Endothelial cell of umbilical vein (primary cell): ENCODE measurements at regions of chr6 and their contacts with region 1.

Region 1: GRCh38 chr6:75208298-75209183 is 2.7 kb upstream of the COL12A1 start:
- DNase-seq: peak; percentile 80
- H3K4me3 ChIP-seq: no peak overlapping the region
- H3K27ac ChIP-seq: no peak overlapping the region
- H3K4me1 ChIP-seq: peaks cover 31% of the 10 kb centered on the region
- H3K27me3 ChIP-seq: peaks cover 17% of the 10 kb centered on the region in 2 experiments
- CTCF ChIP-seq: peak; percentile 78 to 92
- POLR2A ChIP-seq: no peak

Region 2: GRCh38 chr6:73739096-73739495 is 1469.4 kb before region 1 on chr6:
- CTCF ChIA-PET with region 1: interaction called, 200 read pairs
- POLR2A ChIA-PET with region 1: no interaction called
- dilution Hi-C with region 1: no loop called
- intact Hi-C with region 1: loop called (anchors 1 kb)
- DNase-seq: peak; percentile 79
- H3K4me3 ChIP-seq: no peak overlapping the region
- H3K27ac ChIP-seq: no peak overlapping the region
- H3K4me1 ChIP-seq: no peaks in the 10 kb centered on the region
- H3K27me3 ChIP-seq: no peaks in the 10 kb centered on the region
- CTCF ChIP-seq: peak; percentile 43 to 56
- POLR2A ChIP-seq: no peak

Region 3: GRCh38 chr6:73985891-73986290 is 1222.7 kb before region 1 on chr6:
- CTCF ChIA-PET with region 1: interaction called, 19 read pairs
- POLR2A ChIA-PET with region 1: no interaction called
- dilution Hi-C with region 1: no loop called
- intact Hi-C with region 1: no loop called
- DNase-seq: peak; percentile 10
- H3K4me3 ChIP-seq: no peak overlapping the region
- H3K27ac ChIP-seq: no peak overlapping the region
- H3K4me1 ChIP-seq: no peaks in the 10 kb centered on the region
- H3K27me3 ChIP-seq: peaks cover 5 to 6% of the 10 kb centered on the region in 2 experiments
- CTCF ChIP-seq: no peak
- POLR2A ChIP-seq: no peak

Region 4: GRCh38 chr6:74409447-74409846 is 799.1 kb before region 1 on chr6:
- CTCF ChIA-PET with region 1: interaction called, 393 read pairs
- POLR2A ChIA-PET with region 1: no interaction called
- dilution Hi-C with region 1: no loop called
- intact Hi-C with region 1: loop called (anchors 1 kb)
- DNase-seq: peak; percentile 77
- H3K4me3 ChIP-seq: no peak overlapping the region
- H3K27ac ChIP-seq: no peak overlapping the region
- H3K4me1 ChIP-seq: no peaks in the 10 kb centered on the region
- H3K27me3 ChIP-seq: no peaks in the 10 kb centered on the region
- CTCF ChIP-seq: peak; percentile 14 to 23
- POLR2A ChIP-seq: no peak

Region 5: DNA sequence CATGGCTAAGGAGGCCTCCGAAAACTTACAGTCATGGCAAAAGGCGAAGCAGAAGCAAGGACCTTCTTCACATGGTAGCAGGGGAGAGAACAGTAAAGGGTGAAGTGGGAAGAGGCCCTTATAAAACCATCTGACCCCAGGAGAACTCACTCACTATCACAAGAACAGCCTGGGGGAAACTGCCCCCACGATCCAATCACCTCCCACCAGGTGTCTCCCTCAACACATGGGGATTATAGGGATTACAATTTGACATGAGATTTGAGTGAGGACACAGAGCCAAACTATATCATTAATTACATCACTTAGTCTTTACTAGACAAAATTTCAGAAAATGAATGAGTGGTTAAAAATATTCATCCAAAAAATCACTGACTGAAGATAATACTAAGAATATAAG is 456.2 kb before region 1 on chr6:
- CTCF ChIA-PET with region 1: interaction called, 6 read pairs
- POLR2A ChIA-PET with region 1: no interaction called
- dilution Hi-C with region 1: no loop called
- intact Hi-C with region 1: loop called (anchors 1 kb)
- DNase-seq: no peak
- H3K4me3 ChIP-seq: no peak overlapping the region
- H3K27ac ChIP-seq: no peak overlapping the region
- H3K4me1 ChIP-seq: peaks cover 8% of the 10 kb centered on the region
- H3K27me3 ChIP-seq: no peaks in the 10 kb centered on the region
- CTCF ChIP-seq: no peak
- POLR2A ChIP-seq: no peak

Region 6: GRCh38 chr6:75024828-75025227 is 183.7 kb before region 1 on chr6:
- CTCF ChIA-PET with region 1: interaction called, 7 read pairs
- POLR2A ChIA-PET with region 1: no interaction called
- dilution Hi-C with region 1: no loop called
- intact Hi-C with region 1: loop called (anchors 5 kb)
- DNase-seq: peak; percentile 81
- H3K4me3 ChIP-seq: no peak overlapping the region
- H3K27ac ChIP-seq: no peak overlapping the region
- H3K4me1 ChIP-seq: peaks cover 22% of the 10 kb centered on the region
- H3K27me3 ChIP-seq: no peaks in the 10 kb centered on the region
- CTCF ChIP-seq: no peak
- POLR2A ChIP-seq: no peak

Region 7: DNA sequence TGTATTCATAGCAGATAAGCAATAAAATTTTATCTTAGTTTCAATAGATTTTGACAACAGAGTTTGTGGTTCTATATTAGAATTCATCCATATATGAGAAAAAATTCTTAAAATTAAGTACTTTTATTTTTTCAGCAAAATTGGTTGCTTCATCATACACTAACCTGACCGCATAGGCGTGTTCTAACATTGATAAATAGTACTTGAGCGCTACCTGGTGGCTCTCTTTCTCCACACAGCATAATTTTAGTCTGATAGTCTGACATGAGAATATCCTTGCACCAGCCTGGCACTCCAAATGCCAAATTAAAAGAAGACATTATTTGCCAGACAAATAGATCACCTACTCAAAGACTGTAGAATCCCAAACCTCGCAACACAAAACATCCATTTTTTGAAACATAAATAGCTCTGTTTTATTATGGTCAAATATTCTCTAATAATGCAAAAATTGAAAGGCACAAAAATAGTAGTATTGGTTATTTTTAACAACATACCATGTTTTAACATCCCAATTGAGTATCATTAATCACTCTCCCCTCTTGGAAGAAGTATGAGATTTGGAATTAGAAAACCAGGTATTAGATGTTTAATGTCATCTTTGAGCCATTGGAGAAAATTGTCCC is 318.1 kb after region 1 on chr6:
- CTCF ChIA-PET with region 1: interaction called, 8 read pairs
- POLR2A ChIA-PET with region 1: no interaction called
- dilution Hi-C with region 1: no loop called
- intact Hi-C with region 1: loop called (anchors 1 kb)
- DNase-seq: peak; percentile 87
- H3K4me3 ChIP-seq: no peak overlapping the region
- H3K27ac ChIP-seq: no peak overlapping the region
- H3K4me1 ChIP-seq: peaks cover 14% of the 10 kb centered on the region
- H3K27me3 ChIP-seq: peaks cover 2 to 3% of the 10 kb centered on the region in 2 experiments
- CTCF ChIP-seq: peak; percentile 48 to 54
- POLR2A ChIP-seq: no peak

Region 8: DNA sequence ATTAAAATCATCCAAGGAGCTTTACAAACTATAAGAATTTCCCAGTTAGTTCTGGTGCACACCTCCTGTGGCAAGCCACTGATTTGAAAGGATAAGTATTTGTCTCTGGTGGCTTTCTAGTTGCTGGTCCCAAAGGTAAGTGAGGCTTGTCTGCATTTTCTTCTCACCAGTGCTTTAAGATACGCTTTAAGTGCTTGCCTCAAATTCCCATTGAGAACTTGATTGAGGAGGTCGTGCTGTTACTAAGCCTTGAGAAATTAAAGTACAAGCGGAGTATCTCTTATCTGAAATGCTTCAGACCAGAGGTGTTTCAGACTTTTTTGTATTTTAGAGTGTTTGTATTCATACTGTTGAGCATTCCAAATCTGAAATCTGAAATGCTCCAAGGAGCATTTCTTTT is 510.6 kb after region 1 on chr6:
- CTCF ChIA-PET with region 1: no interaction called
- POLR2A ChIA-PET with region 1: no interaction called
- dilution Hi-C with region 1: no loop called
- intact Hi-C with region 1: no loop called
- DNase-seq: no peak
- H3K4me3 ChIP-seq: no peak overlapping the region
- H3K27ac ChIP-seq: no peak overlapping the region
- H3K4me1 ChIP-seq: peaks cover 11% of the 10 kb centered on the region
- H3K27me3 ChIP-seq: no peaks in the 10 kb centered on the region
- CTCF ChIP-seq: no peak
- POLR2A ChIP-seq: no peak